ENCODE measurements at regions of chr15 and their contacts with region 1.

Region 1: DNA sequence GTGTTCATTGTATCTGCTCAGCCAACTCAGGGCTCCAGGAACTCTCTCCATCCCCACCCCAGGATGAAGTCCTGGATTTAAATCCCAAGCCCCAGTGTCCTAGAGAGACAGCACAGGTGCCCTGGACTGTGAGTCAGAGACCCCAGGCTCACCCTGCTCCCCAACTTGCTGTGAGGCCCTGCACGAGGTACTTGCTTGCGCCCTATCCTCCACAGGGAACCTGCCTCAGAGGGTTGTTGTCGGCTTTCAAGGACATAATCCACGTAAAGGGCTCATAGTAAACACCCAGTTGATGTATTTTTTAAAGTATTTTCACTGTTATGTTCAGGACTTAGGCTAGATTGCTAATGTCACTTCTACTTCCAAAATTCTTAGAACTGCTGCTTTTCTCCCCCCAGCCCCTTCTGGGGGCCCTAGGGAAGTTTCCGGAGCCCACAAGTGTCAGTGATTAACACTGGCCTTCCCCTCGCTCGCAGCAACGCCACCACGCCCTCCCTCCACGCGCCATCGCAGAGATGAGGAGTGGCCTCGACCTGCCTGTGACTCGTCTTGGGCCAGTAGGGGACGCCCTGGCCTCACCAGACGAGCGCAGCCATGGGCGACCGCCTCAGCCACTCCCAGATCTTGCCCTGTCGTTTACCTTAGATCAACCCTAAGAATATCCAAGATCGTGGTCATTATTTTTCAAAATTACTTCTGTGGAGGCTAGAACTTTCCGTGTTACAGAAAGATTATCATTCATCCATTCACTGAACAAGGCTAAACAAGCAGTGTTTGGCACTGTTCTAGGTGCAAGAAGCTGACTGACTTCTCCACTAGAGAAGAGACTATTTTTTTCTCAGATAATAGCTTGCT is 6.0 kb upstream of the SRP14 start:
- DNase-seq: peak; percentile 82
- H3K4me3 ChIP-seq: peak overlapping the region; percentile 18
- H3K27ac ChIP-seq: no peak overlapping the region
- H3K27me3 ChIP-seq: no peaks in the 10 kb centered on the region
- CTCF ChIP-seq: peak; percentile 98

Region 2: GRCh38 chr15:39819533-39819932 is 225.4 kb before region 1 on chr15:
- in situ Hi-C with region 1: no loop called
- DNase-seq: no peak
- H3K4me3 ChIP-seq: no peak overlapping the region
- H3K27ac ChIP-seq: no peak overlapping the region
- H3K27me3 ChIP-seq: no peaks in the 10 kb centered on the region
- CTCF ChIP-seq: no peak

Region 3: GRCh38 chr15:40081691-40082194 is 36.8 kb after region 1 on chr15:
- in situ Hi-C with region 1: loop called (anchors 5 kb)
- DNase-seq: peak; percentile 62
- H3K4me3 ChIP-seq: peak overlapping the region; percentile 27
- H3K27ac ChIP-seq: peak overlapping the region; percentile 23
- H3K27me3 ChIP-seq: no peaks in the 10 kb centered on the region
- CTCF ChIP-seq: peak; percentile 29

Region 4: GRCh38 chr15:40108855-40109735 is 64.2 kb after region 1 on chr15 and contains the start of gene BMF:
- in situ Hi-C with region 1: loop called (anchors 10 kb)
- DNase-seq: peak; percentile 99
- H3K4me3 ChIP-seq: peak within 1 kb of the TSS; percentile 80
- H3K27ac ChIP-seq: peak within 1 kb of the TSS; percentile 50
- H3K27me3 ChIP-seq: no peaks in the 10 kb centered on the region
- CTCF ChIP-seq: peak; percentile 59

Region 5: GRCh38 chr15:40217159-40217824 is 172.3 kb after region 1 on chr15:
- in situ Hi-C with region 1: loop called (anchors 10 kb)
- DNase-seq: peak; percentile 64
- H3K4me3 ChIP-seq: no peak overlapping the region
- H3K27ac ChIP-seq: no peak overlapping the region
- H3K27me3 ChIP-seq: no peaks in the 10 kb centered on the region
- CTCF ChIP-seq: peak; percentile 77

Region 6: DNA sequence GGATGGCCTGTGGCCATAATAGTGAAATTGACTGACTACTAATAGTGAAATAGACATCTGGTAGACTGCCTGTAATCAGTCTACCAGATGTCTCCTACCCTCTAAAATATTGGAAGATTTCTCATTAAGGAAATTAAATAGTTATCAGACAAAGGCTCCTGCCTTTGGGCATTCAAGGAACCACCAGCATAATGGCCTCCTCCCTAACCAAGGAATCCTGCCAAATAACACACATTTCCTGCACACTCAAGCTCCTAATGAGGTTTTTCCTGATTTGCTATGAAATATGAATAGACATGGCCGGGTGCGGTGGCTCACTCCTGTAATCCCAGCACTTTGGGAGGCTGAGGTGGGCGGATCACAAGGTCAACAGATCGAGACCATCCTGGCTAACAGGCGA is 1302.3 kb after region 1 on chr15:
- in situ Hi-C with region 1: no loop called
- DNase-seq: no peak
- H3K4me3 ChIP-seq: no peak overlapping the region
- H3K27ac ChIP-seq: no peak overlapping the region
- H3K27me3 ChIP-seq: no peaks in the 10 kb centered on the region
- CTCF ChIP-seq: no peak

Measured in brain microvascular endothelial cell (primary cell).